Activated naive CD4-positive, alpha-beta T cell treated with anti-CD3 and anti-CD28 coated beads for 36 hours (primary cell): ENCODE measurements at regions of chr9 and their contacts with region 1.

Region 1: DNA sequence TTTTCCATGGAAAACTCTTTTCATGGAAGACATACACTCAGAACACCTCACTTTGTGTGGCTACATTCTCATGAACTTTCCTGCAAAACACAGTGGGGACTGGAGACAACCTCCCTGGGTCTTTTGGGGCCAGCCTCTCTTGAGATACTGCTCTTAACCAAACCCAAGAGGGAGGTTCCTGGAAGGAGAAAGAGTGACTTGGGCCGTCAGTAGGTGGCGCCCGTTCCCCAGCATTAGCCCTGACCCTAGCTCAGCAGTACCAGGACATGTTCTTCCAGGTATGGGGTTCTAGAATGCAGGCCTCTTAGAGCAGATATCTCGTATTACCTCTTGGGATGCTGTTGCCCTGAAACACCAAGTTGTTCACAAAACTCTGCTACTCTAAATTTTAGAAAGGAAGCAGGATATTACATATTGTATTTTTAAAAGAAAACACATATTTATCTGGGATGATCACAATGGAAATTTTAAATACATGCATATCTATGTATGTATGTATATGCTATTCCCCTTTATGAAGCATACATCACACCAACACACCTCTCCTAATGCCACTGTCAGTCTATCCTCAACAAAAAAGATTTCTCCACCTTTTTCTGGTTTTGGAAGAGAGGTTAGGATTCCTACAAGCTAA is 15.8 kb upstream of the GLIS3 start:
- DNase-seq: peak; percentile 89
- H3K4me3 Mint-ChIP-seq: no peak overlapping the region
- H3K27ac Mint-ChIP-seq: no peak overlapping the region
- H3K4me1 Mint-ChIP-seq: peaks cover 2% of the 10 kb centered on the region
- H3K27me3 Mint-ChIP-seq: no peaks in the 10 kb centered on the region

Region 2: GRCh38 chr9:4207881-4208615 is 107.7 kb before region 1 on chr9:
- CTCF ChIA-PET with region 1: no interaction called
- intact Hi-C with region 1: no loop called
- DNase-seq: no peak
- H3K4me3 Mint-ChIP-seq: no peak overlapping the region
- H3K27ac Mint-ChIP-seq: no peak overlapping the region
- H3K4me1 Mint-ChIP-seq: no peaks in the 10 kb centered on the region
- H3K27me3 Mint-ChIP-seq: no peaks in the 10 kb centered on the region

Region 3: DNA sequence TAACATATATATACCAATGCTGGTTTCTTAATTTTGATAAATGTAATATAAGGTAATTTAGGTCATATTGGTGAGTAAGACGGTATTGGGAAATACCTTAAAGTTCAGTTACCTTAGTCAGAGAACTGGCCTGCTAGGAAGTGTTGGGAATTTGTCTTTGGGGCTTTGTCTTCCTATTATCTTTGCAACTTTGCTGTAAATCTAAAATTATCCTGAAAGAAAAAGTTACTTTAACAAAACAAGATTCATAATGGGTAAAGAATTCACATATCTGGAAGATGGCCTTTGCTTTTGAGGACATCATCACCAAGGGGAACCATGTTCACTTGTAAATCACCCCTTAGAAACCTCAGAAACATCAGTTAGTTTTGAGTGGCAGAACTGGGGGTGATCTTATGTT is 57.4 kb before region 1 on chr9:
- CTCF ChIA-PET with region 1: no interaction called
- intact Hi-C with region 1: no loop called
- DNase-seq: no peak
- H3K4me3 Mint-ChIP-seq: no peak overlapping the region
- H3K27ac Mint-ChIP-seq: no peak overlapping the region
- H3K4me1 Mint-ChIP-seq: no peaks in the 10 kb centered on the region
- H3K27me3 Mint-ChIP-seq: peaks cover 2% of the 10 kb centered on the region

Region 4: DNA sequence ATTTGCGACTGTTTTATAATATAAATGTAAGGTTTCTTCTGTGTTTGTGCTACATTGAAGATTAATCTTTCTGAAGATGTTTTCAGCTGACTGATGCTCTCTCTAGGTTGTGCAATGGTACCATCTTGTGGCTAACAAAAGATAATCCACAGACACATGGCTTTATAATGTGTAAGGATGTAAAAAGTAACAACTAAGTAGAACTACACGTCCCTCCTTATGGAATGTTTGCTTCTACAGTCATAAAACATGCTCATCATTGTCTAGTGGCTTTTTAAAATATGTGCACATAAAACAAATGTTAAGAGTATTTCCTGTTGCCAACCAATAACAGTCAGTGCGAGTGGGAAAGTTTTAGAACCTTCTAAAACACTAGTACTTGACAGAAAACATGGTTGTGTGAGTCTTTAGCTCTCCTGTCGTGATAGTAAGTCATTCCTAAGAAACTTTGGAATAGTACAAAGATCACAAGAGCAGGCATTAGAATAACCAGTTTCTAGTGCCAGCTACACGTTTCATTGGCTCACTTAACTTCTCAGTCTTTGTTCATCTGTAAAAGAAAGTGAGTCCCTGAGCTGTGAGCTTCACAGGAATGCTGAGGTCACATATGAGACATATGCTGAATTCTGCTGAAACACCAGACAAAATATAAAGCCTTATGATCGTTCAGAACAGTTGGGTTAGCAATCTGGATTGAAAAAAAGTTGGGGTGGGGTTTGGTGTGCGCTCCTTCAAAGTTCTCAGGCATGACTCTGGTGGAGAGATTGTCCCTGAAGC is 59.9 kb after region 1 on chr9:
- CTCF ChIA-PET with region 1: interaction called, 8 read pairs
- intact Hi-C with region 1: loop called (anchors 2 kb)
- DNase-seq: no peak
- H3K4me3 Mint-ChIP-seq: no peak overlapping the region
- H3K27ac Mint-ChIP-seq: no peak overlapping the region
- H3K4me1 Mint-ChIP-seq: no peaks in the 10 kb centered on the region
- H3K27me3 Mint-ChIP-seq: peaks cover 3% of the 10 kb centered on the region

Region 5: GRCh38 chr9:4404156-4404555 is 88.5 kb after region 1 on chr9:
- CTCF ChIA-PET with region 1: no interaction called
- intact Hi-C with region 1: no loop called
- DNase-seq: no peak
- H3K4me3 Mint-ChIP-seq: no peak overlapping the region
- H3K27ac Mint-ChIP-seq: no peak overlapping the region
- H3K4me1 Mint-ChIP-seq: no peaks in the 10 kb centered on the region
- H3K27me3 Mint-ChIP-seq: no peaks in the 10 kb centered on the region